ENCODE measurements at regions of chr3 and their contacts with region 1.

Region 1: GRCh38 chr3:33773637-33774036 is 24.8 kb upstream of the PDCD6IP start:
- DNase-seq: no peak
- H3K4me3 ChIP-seq: no peak overlapping the region
- H3K27me3 ChIP-seq: no peaks in the 10 kb centered on the region
- CTCF ChIP-seq: no peak

Region 2: DNA sequence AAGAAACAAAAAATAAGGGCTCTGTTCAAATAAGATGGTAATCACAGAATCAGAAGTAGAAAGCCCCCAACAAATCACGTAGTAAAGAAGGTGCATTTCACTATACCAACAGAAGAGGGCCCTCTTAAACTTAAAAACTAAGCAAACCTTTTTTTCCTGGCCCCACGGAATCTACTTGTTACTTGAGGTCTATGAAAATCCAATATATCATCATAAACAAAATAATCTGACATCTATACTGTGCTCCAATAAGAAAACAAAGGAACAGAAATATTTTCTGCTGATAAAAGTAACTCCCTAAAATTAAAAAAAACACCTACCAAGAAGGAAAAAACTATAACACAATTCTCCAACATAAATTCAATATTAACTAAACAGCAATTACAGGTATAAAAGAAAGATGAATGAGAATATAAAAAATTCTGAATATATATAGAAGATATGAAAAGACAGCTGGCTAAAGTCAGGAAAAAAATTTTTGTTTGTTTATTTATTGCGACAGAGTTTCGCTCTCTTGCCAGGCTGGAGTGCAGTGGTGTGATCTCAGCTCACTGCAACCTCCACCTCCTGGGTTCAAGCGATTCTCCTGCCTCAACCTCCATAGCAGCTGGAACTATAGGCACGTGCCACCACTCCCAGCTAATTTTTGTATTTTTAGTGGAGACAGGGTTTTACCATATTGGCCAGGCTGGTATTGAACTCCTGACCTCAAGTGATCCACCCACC is 137.3 kb before region 1 on chr3:
- CTCF ChIA-PET with region 1: interaction called, 55 read pairs
- POLR2A ChIA-PET with region 1: no interaction called
- DNase-seq: no peak
- H3K4me3 ChIP-seq: no peak overlapping the region
- H3K27me3 ChIP-seq: no peaks in the 10 kb centered on the region
- CTCF ChIP-seq: peak; percentile 61

Region 3: DNA sequence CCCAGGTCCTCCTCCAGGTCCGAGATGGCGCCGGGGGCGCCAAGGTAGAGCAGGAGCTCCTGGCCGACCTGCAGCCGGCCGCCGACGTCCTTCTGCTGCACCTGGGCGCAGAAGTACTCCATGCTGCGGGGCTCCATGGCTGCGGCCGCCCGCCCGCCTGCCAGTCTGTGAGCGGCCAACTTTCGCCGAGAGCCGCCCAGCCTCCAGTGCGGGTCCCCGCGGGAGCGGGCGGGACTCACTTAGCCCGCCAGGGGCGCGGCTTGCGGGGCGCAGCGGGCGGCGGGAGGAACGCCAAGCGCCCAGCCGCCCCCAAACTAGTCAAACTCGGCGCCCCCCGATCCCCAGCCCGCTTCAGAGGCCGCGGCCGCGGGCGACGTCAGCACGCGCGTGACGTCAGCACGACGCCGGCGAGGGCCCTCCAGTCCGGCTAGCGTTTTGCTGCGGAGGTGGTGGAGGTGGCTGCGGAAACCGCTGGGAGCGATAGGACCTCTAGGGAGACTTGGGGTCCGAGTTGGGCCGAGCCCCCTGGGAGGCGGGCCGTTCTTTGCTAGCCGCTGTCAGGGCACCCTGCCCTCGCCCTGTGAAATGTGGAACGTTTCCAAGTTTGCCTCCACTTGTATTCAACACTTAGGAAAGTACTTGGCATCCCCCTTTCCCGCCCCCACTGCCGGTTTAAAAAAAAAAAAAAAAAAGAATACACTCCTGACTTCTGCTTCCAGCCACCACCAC is 55.6 kb before region 1 on chr3 and contains the start of gene CLASP2:
- CTCF ChIA-PET with region 1: interaction called, 10 read pairs
- POLR2A ChIA-PET with region 1: no interaction called
- DNase-seq: no peak
- H3K4me3 ChIP-seq: peak within 1 kb of the TSS; percentile 67
- H3K27me3 ChIP-seq: no peaks in the 10 kb centered on the region
- CTCF ChIP-seq: no peak
- polyA plus RNA-seq, gene CLASP2: 20.5 and 35.8 TPM in 2 replicates

Measured in BJ (cell line).